Activated CD4-positive, alpha-beta T cell treated with anti-CD3 and anti-CD28 coated beads for 36 hours (primary cell): ENCODE measurements at regions of chr11 and their contacts with region 1.

Region 1: DNA sequence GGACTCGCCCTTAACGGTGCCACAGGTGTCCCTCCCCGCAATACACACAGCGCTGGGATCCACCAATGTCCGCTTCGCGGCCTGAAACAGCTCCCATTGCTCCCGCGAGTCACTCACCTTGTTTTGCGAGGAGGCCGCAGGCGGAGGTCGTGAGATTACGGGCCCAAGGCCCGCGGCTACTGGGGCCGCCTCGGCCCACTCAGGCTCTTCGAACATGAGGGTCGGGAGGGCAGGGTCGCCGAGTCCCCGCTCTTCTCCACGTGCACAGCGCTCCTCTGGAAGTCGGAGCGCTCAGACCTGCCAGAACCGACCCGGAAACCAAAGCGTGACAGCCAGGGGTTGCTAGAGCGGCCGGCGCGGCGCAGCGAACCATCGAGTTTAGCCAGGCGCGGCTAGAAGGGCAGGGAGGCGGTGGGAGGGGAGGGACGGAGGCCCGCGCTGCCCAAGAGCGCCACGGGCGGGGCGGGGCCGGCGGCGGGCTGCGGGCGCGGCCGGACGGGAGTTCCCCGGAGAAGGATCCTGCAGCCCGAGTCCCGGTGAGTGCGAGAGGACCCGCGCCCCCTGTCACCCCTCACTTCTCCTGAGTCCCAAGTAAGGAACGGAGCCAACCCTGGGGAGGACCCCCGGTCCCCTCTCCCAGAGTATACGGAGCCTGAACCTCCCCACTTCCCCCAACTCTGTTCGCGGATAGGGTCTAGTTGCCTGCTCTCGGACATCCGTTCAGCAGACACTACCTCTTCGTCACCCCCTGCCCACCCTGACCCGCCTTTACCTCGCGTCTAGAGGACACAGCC is at the starts of genes ILK and RRP8:
- DNase-seq: peak; percentile 93
- ATAC-seq: peak; percentile 70
- H3K4me3 Mint-ChIP-seq: no peak within 1 kb of the TSS
- H3K27ac Mint-ChIP-seq: no peak within 1 kb of the TSS
- H3K4me1 Mint-ChIP-seq: peaks cover 37% of the 10 kb centered on the region
- H3K27me3 Mint-ChIP-seq: no peaks in the 10 kb centered on the region
- total RNA-seq, gene ILK: 85.6 to 89.0 TPM
- total RNA-seq, gene RRP8: 34.4 to 35.0 TPM

Region 2: DNA sequence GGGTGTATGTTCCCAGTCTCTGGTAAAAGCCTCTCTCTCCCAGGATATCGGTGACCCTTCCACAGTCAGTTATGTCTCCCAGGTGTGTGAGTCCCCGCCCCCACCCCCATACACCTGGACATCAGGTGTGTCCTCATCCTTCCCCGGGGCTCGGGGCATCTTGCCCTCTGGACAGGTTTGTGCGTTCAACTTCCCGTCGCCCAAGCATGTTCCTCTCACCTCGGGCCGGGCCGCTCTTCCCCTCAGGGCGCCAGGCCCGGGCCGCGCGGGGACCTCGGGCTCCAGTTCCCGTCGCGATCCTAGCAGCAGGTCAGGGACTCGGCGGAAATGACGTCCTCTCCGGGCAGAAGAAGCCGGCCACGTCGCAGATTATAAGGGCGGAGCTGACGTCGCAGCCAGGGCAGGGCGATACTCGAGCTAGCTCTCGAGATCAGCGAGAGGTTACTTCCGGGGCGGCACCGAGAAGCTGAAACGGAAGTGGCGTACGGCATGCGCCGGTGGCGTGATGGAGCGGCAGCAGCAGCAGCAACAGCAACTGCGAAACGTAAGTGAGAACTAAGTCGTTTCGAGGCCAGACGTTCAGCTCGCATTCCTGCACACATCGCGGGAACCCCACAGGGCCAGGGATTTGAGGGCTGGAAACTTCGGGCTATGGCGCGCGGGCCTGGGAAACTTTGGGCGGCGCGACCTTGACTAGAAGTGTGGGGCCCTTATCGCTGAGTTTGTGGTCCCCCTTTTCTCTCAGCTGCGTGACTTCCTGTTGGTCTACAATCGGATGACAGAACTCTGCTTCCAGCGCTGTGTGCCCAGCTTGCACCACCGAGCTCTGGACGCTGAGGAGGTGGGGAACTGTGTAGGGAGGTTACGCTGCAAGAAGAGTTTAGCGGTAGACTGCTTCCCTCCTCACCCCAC is 122.2 kb before region 1 on chr11 and contains the starts of genes ARFIP2 and TIMM10B:
- CTCF ChIA-PET with region 1: no interaction called
- POLR2A ChIA-PET with region 1: interaction called, 3 read pairs
- intact Hi-C with region 1: loop called (anchors 1 kb)
- DNase-seq: peak; percentile 99
- ATAC-seq: peak; percentile 98
- H3K4me3 Mint-ChIP-seq: peak within 1 kb of the TSS; percentile 80
- H3K27ac Mint-ChIP-seq: peak within 1 kb of the TSS; percentile 92
- H3K4me1 Mint-ChIP-seq: peaks cover 30% of the 10 kb centered on the region
- H3K27me3 Mint-ChIP-seq: no peaks in the 10 kb centered on the region
- total RNA-seq, gene ARFIP2: 36.7 to 40.3 TPM
- total RNA-seq, gene TIMM10B: 27.1 to 39.2 TPM

Region 3: DNA sequence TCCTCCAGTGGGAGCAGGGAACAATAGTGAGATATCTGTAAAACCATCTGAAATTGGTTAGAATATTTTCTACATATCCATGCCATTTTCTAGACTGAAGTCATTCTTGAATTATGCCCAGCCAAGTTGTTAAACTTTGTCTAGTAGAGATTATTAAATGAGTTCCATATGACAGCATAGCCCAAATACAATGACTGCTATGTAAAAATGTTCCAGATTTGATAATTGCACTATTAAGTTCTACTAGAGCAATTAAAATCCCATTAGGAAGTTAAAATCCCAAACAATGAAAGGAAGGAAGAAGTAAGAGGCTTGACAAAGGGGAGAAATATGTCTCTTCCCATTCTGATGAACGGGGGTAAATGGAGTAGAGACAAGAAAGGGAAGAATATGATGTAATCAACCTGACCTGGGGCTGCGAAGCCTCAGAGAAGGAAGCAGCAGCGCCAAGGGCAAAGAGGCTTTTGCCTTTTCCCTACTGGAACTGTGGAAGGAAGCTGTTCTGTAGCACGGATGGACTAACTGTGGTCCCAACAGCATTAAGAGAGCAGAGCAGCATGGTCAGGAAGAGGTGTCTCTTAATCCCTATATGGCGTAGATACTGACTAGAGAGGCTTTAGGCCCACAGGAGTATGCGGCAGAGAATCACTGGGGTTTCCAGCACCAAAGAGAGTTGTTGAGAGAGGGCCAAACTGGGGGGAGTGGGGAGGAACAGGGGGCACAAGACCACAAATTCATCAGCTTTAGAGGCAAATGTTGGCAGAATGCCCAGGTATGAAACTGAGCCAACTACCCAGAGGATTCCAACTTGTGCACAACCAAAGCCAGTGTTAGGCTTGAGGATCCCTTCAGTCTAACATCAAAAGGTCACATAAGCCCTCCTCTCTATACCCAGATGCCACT is 26.8 kb before region 1 on chr11:
- CTCF ChIA-PET with region 1: no interaction called
- POLR2A ChIA-PET with region 1: no interaction called
- intact Hi-C with region 1: no loop called
- DNase-seq: no peak
- ATAC-seq: no peak
- H3K4me3 Mint-ChIP-seq: no peak overlapping the region
- H3K27ac Mint-ChIP-seq: no peak overlapping the region
- H3K4me1 Mint-ChIP-seq: peaks cover 7% of the 10 kb centered on the region
- H3K27me3 Mint-ChIP-seq: no peaks in the 10 kb centered on the region

Region 4: GRCh38 chr11:6619004-6619745 is 15.7 kb after region 1 on chr11 and contains the start of gene TPP1:
- CTCF ChIA-PET with region 1: interaction called, 15 read pairs
- POLR2A ChIA-PET with region 1: interaction called, 4 read pairs
- intact Hi-C with region 1: loop called in 1 of 2 experiments (anchors 1 kb)
- DNase-seq: peak; percentile 91
- ATAC-seq: peak; percentile 93
- H3K4me3 Mint-ChIP-seq: no peak within 1 kb of the TSS
- H3K27ac Mint-ChIP-seq: no peak within 1 kb of the TSS
- H3K4me1 Mint-ChIP-seq: peaks cover 8% of the 10 kb centered on the region
- H3K27me3 Mint-ChIP-seq: no peaks in the 10 kb centered on the region
- total RNA-seq, gene TPP1: 38.1 to 47.9 TPM

Region 5: GRCh38 chr11:6682936-6683861 is 79.7 kb after region 1 on chr11 and contains the start of gene MRPL17:
- CTCF ChIA-PET with region 1: interaction called, 15 read pairs
- POLR2A ChIA-PET with region 1: interaction called, 3 read pairs
- intact Hi-C with region 1: loop called (anchors 1 kb)
- DNase-seq: peak; percentile 99
- ATAC-seq: peak; percentile 96
- H3K4me3 Mint-ChIP-seq: peak within 1 kb of the TSS; percentile 97
- H3K27ac Mint-ChIP-seq: peak within 1 kb of the TSS; percentile 100
- H3K4me1 Mint-ChIP-seq: peaks cover 29% of the 10 kb centered on the region
- H3K27me3 Mint-ChIP-seq: no peaks in the 10 kb centered on the region
- total RNA-seq, gene MRPL17: 118 to 156 TPM

Region 6: GRCh38 chr11:6737872-6738466 is 134.5 kb after region 1 on chr11:
- CTCF ChIA-PET with region 1: interaction called, 3 read pairs
- POLR2A ChIA-PET with region 1: no interaction called
- intact Hi-C with region 1: loop called (anchors 2 to 5 kb)
- DNase-seq: peak; percentile 76
- ATAC-seq: peak; percentile 52
- H3K4me3 Mint-ChIP-seq: no peak overlapping the region
- H3K27ac Mint-ChIP-seq: peak overlapping the region; percentile 73
- H3K4me1 Mint-ChIP-seq: peaks cover 94% of the 10 kb centered on the region
- H3K27me3 Mint-ChIP-seq: no peaks in the 10 kb centered on the region

Region 7: DNA sequence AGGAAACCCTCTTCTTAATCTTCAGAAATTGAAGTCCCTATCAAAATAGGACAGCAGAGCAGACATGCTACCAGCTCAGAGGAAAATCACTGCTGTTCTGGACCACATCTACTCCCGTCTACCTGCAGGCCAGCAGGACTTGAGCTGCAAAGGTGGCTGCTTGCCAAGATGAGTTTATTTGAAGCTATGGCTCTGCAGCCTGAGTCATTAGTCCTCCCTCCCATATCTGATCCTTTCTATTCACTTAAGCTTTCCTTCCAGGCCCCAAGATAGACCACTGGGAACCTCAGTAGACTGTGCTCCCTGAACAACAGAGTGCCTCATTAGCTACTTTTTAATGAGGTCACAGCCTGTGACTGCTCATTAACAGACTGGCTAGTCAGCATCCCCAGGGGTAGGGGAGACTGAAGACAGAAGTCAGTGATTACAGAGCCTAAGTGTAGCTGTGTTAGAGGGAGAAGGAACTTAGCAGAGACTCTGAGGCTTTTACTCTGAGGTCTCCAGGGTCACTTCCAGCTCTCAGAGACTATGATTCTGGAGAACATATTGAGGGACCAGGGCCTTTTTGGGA is 252.6 kb after region 1 on chr11:
- CTCF ChIA-PET with region 1: no interaction called
- POLR2A ChIA-PET with region 1: no interaction called
- intact Hi-C with region 1: loop called in 1 of 2 experiments (anchors 2 kb)
- DNase-seq: no peak
- ATAC-seq: no peak
- H3K4me3 Mint-ChIP-seq: no peak overlapping the region
- H3K27ac Mint-ChIP-seq: no peak overlapping the region
- H3K4me1 Mint-ChIP-seq: peaks cover 10% of the 10 kb centered on the region
- H3K27me3 Mint-ChIP-seq: peaks cover 14% of the 10 kb centered on the region